ENCODE measurements at regions of chr1 and their contacts with region 1.

Region 1: DNA sequence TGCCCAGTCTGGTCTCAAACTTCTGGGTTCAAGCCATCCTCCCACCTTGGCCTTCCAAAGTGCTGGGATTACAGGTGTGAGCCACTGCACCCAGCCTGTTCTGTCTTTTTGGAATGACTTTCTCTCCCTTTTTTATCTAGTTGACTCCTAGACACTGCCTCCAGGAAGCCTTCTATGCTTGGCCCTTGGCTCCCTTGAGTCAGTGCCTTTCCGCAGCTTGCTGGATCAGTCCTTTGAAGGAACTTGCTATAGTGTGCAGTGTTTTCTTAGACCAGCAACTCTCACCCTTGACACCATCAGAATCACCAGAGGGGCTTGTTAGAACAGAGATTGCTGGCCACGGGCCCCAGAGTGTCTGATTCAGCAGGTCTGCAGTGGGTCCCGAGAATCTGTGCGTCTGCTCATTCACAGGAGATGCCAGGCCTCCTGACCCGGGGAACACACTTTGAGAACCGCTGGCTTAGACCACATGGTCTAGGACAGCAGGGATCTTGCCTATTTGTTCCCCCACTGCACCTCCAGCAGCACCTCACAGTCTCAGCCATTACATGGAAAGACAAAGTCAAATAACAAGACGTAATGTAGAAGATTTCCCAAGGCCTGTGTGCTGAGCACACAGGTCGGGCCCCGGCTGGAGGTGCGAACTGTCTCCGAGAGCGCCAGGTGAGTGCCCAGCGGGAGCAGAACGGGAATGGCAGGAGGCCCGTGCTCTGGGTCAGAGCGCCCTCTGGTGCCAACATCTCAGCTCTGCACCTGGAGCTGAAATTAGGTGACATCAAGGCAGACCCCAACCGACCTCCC is 27.4 kb upstream of the CTPS1 start:
- DNase-seq: peak; percentile 69
- H3K4me3 Mint-ChIP-seq: no peak overlapping the region
- H3K27ac Mint-ChIP-seq: no peak overlapping the region
- H3K4me1 Mint-ChIP-seq: peaks cover 4% of the 10 kb centered on the region
- H3K27me3 Mint-ChIP-seq: peaks cover 18% of the 10 kb centered on the region

Region 2: GRCh38 chr1:40612345-40612831 is 339.8 kb before region 1 on chr1:
- CTCF ChIA-PET with region 1: interaction called, 7 read pairs
- intact Hi-C with region 1: loop called (anchors 2 kb)
- DNase-seq: peak; percentile 89
- H3K4me3 Mint-ChIP-seq: no peak overlapping the region
- H3K27ac Mint-ChIP-seq: no peak overlapping the region
- H3K4me1 Mint-ChIP-seq: no peaks in the 10 kb centered on the region
- H3K27me3 Mint-ChIP-seq: no peaks in the 10 kb centered on the region

Region 3: DNA sequence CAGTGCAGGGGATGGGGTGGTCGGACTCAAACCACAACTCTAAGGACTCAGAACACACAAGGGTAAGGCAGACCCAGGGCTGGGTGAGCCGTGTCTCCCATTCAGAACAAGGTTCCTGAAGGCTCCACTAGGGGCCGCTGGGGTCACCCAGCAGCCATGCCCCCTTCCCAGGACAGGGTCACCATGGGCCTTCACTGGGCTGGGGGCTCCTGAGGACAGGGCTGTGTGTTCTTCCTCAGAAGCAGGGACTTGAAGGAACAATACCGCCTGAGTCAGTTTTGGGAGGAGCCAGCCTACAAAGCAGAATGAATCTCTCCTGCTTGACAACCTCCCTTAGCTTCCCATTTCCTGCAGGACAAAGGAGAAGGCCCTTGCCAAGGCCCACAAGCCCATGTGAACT is 302.1 kb before region 1 on chr1:
- CTCF ChIA-PET with region 1: no interaction called
- intact Hi-C with region 1: no loop called
- DNase-seq: peak; percentile 23
- H3K4me3 Mint-ChIP-seq: no peak overlapping the region
- H3K27ac Mint-ChIP-seq: no peak overlapping the region
- H3K4me1 Mint-ChIP-seq: no peaks in the 10 kb centered on the region
- H3K27me3 Mint-ChIP-seq: peaks cover 3% of the 10 kb centered on the region

Region 4: DNA sequence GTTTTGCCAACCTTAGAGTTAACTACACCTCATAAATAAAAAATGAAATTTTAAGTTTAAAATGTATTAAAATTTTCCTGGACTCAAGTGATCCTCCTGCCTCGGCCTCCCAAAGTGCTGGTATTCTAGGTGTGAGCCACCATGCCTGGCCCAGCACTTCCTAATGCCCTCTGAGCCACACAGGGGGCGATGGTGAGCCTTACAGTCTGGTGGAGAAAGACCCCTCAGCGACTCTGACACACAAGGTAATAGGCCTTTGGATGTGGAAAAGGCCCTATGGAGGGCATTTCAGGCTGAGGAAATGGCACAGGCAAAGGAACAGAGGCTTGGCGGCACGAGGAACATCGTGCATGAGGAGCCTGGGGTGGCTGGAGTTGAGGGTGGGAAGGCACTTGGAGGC is 96.6 kb before region 1 on chr1:
- CTCF ChIA-PET with region 1: interaction called, 24 read pairs
- intact Hi-C with region 1: loop called (anchors 1 kb)
- DNase-seq: peak; percentile 27
- H3K4me3 Mint-ChIP-seq: no peak overlapping the region
- H3K27ac Mint-ChIP-seq: no peak overlapping the region
- H3K4me1 Mint-ChIP-seq: no peaks in the 10 kb centered on the region
- H3K27me3 Mint-ChIP-seq: peaks cover 4% of the 10 kb centered on the region

Region 5: GRCh38 chr1:40877698-40878097 is 74.4 kb before region 1 on chr1:
- CTCF ChIA-PET with region 1: interaction called, 12 read pairs
- intact Hi-C with region 1: no loop called
- DNase-seq: peak; percentile 46
- H3K4me3 Mint-ChIP-seq: no peak overlapping the region
- H3K27ac Mint-ChIP-seq: peak overlapping the region; percentile 50
- H3K4me1 Mint-ChIP-seq: peaks cover 30% of the 10 kb centered on the region
- H3K27me3 Mint-ChIP-seq: peaks cover 6% of the 10 kb centered on the region

Region 6: GRCh38 chr1:40973912-40974311 is 21.8 kb after region 1 on chr1:
- CTCF ChIA-PET with region 1: interaction called, 10 read pairs
- intact Hi-C with region 1: no loop called
- DNase-seq: no peak
- H3K4me3 Mint-ChIP-seq: no peak overlapping the region
- H3K27ac Mint-ChIP-seq: no peak overlapping the region
- H3K4me1 Mint-ChIP-seq: peaks cover 2% of the 10 kb centered on the region
- H3K27me3 Mint-ChIP-seq: no peaks in the 10 kb centered on the region

Region 7: GRCh38 chr1:41245659-41246058 is 293.5 kb after region 1 on chr1:
- CTCF ChIA-PET with region 1: no interaction called
- intact Hi-C with region 1: no loop called
- DNase-seq: no peak
- H3K4me3 Mint-ChIP-seq: no peak overlapping the region
- H3K27ac Mint-ChIP-seq: no peak overlapping the region
- H3K4me1 Mint-ChIP-seq: peaks cover 9% of the 10 kb centered on the region
- H3K27me3 Mint-ChIP-seq: no peaks in the 10 kb centered on the region

Region 8: GRCh38 chr1:41353726-41354125 is 401.6 kb after region 1 on chr1:
- CTCF ChIA-PET with region 1: no interaction called
- intact Hi-C with region 1: no loop called
- DNase-seq: no peak
- H3K4me3 Mint-ChIP-seq: no peak overlapping the region
- H3K27ac Mint-ChIP-seq: peak overlapping the region; percentile 57
- H3K4me1 Mint-ChIP-seq: peaks cover 6% of the 10 kb centered on the region
- H3K27me3 Mint-ChIP-seq: peaks cover 14% of the 10 kb centered on the region

Region 9: GRCh38 chr1:41474490-41475271 is 522.5 kb after region 1 on chr1:
- CTCF ChIA-PET with region 1: no interaction called
- intact Hi-C with region 1: no loop called
- DNase-seq: no peak
- H3K4me3 Mint-ChIP-seq: no peak overlapping the region
- H3K27ac Mint-ChIP-seq: peak overlapping the region; percentile 19
- H3K4me1 Mint-ChIP-seq: no peaks in the 10 kb centered on the region
- H3K27me3 Mint-ChIP-seq: no peaks in the 10 kb centered on the region

Measured in activated naive CD4-positive, alpha-beta T cell treated with anti-CD3 and anti-CD28 coated beads for 36 hours (primary cell).